ENCODE measurements at regions of chr6 and their contacts with region 1.

Region 1: DNA sequence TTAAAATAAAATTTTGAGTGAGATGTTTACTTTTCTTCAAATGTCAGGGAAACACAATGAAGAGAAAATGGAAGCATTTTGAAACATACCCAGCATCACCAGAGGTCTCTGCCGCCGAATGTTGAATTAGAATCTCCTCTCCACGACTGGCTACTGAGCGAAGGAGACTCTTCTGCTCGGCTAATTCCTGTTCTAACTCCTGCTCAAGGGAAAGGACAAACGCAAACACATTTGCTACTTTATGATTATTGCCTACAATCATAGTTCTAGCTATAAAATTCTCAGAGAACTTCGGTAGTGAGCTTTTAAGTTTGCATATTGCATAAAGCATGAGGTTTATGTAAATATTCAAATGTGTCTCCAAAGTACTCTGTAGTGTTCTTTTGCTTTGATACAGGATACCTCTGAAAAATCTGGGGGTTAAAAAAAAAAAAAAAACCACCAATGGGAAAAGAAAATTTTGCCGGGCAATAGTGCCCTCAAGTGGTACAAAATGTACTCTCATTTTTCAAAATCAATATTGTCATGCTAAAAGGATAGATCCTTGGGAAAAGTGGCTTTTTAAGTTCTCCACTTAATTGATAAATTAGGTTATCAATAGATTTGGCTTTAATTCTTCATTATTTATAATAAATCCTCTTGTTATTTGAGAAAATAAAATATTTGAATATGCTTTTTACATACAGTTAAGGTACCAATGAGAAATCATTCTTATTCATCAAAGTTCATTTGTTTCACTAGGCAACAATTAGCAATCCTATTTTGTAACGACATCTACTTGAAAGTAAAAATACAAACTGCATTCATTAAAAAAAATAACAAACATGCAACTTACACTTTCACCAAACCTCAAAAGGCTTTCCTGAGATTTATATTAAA is 369.0 kb downstream of the SYNE1 start:
- DNase-seq: peak; percentile 52
- H3K4me3 ChIP-seq: no peak overlapping the region
- H3K27ac ChIP-seq: no peak overlapping the region
- H3K4me1 ChIP-seq: no peaks in the 10 kb centered on the region
- H3K27me3 ChIP-seq: no peaks in the 10 kb centered on the region
- CTCF ChIP-seq: peak; percentile 25 to 26
- POLR2A ChIP-seq: no peak

Region 2: GRCh38 chr6:151409260-151409659 is 858.9 kb before region 1 on chr6:
- CTCF ChIA-PET with region 1: interaction called, 11 read pairs
- POLR2A ChIA-PET with region 1: no interaction called
- dilution Hi-C with region 1: no loop called
- intact Hi-C with region 1: no loop called
- DNase-seq: no peak
- H3K4me3 ChIP-seq: no peak overlapping the region
- H3K27ac ChIP-seq: no peak overlapping the region
- H3K4me1 ChIP-seq: no peaks in the 10 kb centered on the region
- H3K27me3 ChIP-seq: no peaks in the 10 kb centered on the region
- CTCF ChIP-seq: no peak
- POLR2A ChIP-seq: no peak

Region 3: GRCh38 chr6:151451950-151452749 is 816.1 kb before region 1 on chr6 and contains the start of gene RMND1:
- CTCF ChIA-PET with region 1: interaction called, 3 read pairs
- POLR2A ChIA-PET with region 1: no interaction called
- dilution Hi-C with region 1: no loop called
- intact Hi-C with region 1: loop called (anchors 2 kb)
- DNase-seq: peak; percentile 100
- H3K4me3 ChIP-seq: peak within 1 kb of the TSS; percentile 78 to 100 (median 100)
- H3K27ac ChIP-seq: peak within 1 kb of the TSS; percentile 78
- H3K4me1 ChIP-seq: peaks cover 13% of the 10 kb centered on the region
- H3K27me3 ChIP-seq: no peaks in the 10 kb centered on the region
- CTCF ChIP-seq: no peak
- POLR2A ChIP-seq: peak; percentile 93
- total RNA-seq, gene RMND1: 17.2 and 21.4 TPM in 2 replicates

Region 4: GRCh38 chr6:151647976-151648639 is 620.1 kb before region 1 on chr6:
- CTCF ChIA-PET with region 1: interaction called, 11 read pairs
- POLR2A ChIA-PET with region 1: no interaction called
- dilution Hi-C with region 1: no loop called
- intact Hi-C with region 1: loop called (anchors 1 kb)
- DNase-seq: peak; percentile 11
- H3K4me3 ChIP-seq: no peak overlapping the region
- H3K27ac ChIP-seq: no peak overlapping the region
- H3K4me1 ChIP-seq: no peaks in the 10 kb centered on the region
- H3K27me3 ChIP-seq: no peaks in the 10 kb centered on the region
- CTCF ChIP-seq: peak; percentile 45 to 47
- POLR2A ChIP-seq: no peak

Region 5: GRCh38 chr6:151675746-151676416 is 592.3 kb before region 1 on chr6:
- CTCF ChIA-PET with region 1: interaction called, 24 read pairs
- POLR2A ChIA-PET with region 1: no interaction called
- dilution Hi-C with region 1: no loop called
- intact Hi-C with region 1: loop called (anchors 1 kb)
- DNase-seq: peak; percentile 46
- H3K4me3 ChIP-seq: peak overlapping the region in 1 of 3 experiments; percentile 3
- H3K27ac ChIP-seq: no peak overlapping the region
- H3K4me1 ChIP-seq: peaks cover 8% of the 10 kb centered on the region
- H3K27me3 ChIP-seq: peaks cover 0 to 1% of the 10 kb centered on the region in 2 experiments
- CTCF ChIP-seq: peak; percentile 92
- POLR2A ChIP-seq: no peak

Region 6: GRCh38 chr6:152338335-152339125 is 70.3 kb after region 1 on chr6:
- CTCF ChIA-PET with region 1: interaction called, 14 read pairs
- POLR2A ChIA-PET with region 1: no interaction called
- dilution Hi-C with region 1: no loop called
- intact Hi-C with region 1: no loop called
- DNase-seq: peak; percentile 68
- H3K4me3 ChIP-seq: no peak overlapping the region
- H3K27ac ChIP-seq: no peak overlapping the region
- H3K4me1 ChIP-seq: no peaks in the 10 kb centered on the region
- H3K27me3 ChIP-seq: no peaks in the 10 kb centered on the region
- CTCF ChIP-seq: peak; percentile 87 to 89
- POLR2A ChIP-seq: no peak